ENCODE measurements at regions of chr21 and their contacts with region 1.

Region 1: GRCh38 chr21:35932232-35932911 is 128.0 kb downstream of the SETD4 start:
- DNase-seq: peak; percentile 70 to 86 (median 78)
- ATAC-seq: peak; percentile 90 to 97 (median 96)
- H3K4me3 ChIP-seq: peak overlapping the region in 1 of 12 donors; percentile 25
- H3K27ac ChIP-seq: peak overlapping the region; percentile 11 to 91 (median 77)
- H3K4me1 ChIP-seq: peaks cover 0 to 33% (median 22%) of the 10 kb centered on the region in 12 donors
- H3K27me3 ChIP-seq: no peaks in the 10 kb centered on the region
- CTCF ChIP-seq: no peak
- POLR2A ChIP-seq: no peak

Region 2: GRCh38 chr21:35840197-35840799 is 92.1 kb before region 1 on chr21:
- intact Hi-C with region 1: loop called in 2 of 10 experiments (anchors 5 to 10 kb)
- DNase-seq: peak in 4 of 5 donors; percentile 48 to 64 (median 56)
- ATAC-seq: peak in 3 of 4 donors; percentile 51 to 62 (median 58)
- H3K4me3 ChIP-seq: no peak overlapping the region
- H3K27ac ChIP-seq: no peak overlapping the region
- H3K4me1 ChIP-seq: peaks cover 0 to 7% (median 0%) of the 10 kb centered on the region in 12 donors
- H3K27me3 ChIP-seq: no peaks in the 10 kb centered on the region
- CTCF ChIP-seq: peak; percentile 62 to 87 (median 82)
- POLR2A ChIP-seq: no peak

Region 3: DNA sequence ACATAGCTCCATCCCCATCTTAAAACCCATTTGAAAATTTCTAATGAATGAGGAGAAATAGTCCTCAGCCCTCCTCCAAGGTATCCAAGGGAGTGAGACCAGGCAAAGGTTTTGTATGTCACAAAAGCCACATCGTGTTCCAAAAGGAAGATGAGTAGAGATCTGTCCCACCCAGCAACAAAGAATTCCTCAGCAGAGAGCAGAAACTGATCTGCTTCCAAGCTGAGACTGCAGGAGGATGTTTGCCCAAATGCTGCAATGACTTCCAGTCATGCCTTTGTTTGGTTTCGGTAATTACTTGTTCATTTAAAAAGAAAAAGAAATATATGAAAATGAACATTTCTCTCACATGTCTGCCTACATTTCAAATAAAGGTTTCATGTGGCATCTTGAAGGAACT is 58.9 kb before region 1 on chr21:
- intact Hi-C with region 1: no loop called
- DNase-seq: no peak
- ATAC-seq: no peak
- H3K4me3 ChIP-seq: no peak overlapping the region
- H3K27ac ChIP-seq: no peak overlapping the region
- H3K4me1 ChIP-seq: no peaks in the 10 kb centered on the region
- H3K27me3 ChIP-seq: peaks cover 0 to 5% (median 0%) of the 10 kb centered on the region in 9 donors
- CTCF ChIP-seq: no peak
- POLR2A ChIP-seq: no peak

Region 4: DNA sequence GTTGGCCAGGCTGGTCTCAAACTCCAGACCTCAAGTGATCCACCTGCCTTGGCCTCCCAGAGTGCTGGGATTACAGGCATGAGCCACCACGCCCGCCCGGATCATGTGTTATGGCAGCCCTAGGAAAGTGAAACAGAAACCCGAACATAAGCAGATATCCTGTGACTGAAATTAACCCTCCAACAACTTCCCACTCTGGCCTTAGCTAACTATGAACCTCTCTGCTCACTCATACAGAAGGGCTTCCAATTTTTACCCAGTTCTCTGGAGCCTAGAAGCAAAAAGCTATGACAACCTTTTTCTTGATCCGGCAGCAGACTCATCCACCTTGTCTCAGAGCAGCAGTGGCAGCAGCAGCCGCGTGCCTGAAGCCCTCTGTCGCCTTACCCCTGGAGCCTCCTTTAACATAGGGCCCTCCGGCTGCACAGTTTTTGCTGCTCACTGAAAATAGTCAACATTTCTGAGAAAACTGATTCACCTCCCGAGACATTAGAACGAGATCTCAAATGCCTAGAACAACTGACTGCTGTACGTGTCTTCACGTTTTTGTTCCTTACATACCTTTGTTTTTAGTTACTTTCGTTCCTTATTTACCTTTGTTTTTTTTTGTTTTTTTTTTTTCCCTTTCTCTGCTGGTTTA is 146.8 kb after region 1 on chr21:
- intact Hi-C with region 1: no loop called
- DNase-seq: peak in 2 of 5 donors; percentile 28 to 38
- ATAC-seq: peak in 3 of 4 donors; percentile 36 to 60 (median 47)
- H3K4me3 ChIP-seq: no peak overlapping the region
- H3K27ac ChIP-seq: peak overlapping the region in 1 of 12 donors; percentile 76
- H3K4me1 ChIP-seq: peaks cover 0 to 32% (median 0%) of the 10 kb centered on the region in 12 donors
- H3K27me3 ChIP-seq: no peaks in the 10 kb centered on the region
- CTCF ChIP-seq: no peak
- POLR2A ChIP-seq: no peak